CD8-positive, alpha-beta T cell (primary cell): ENCODE measurements at regions of chr7 and their contacts with region 1.

Region 1: GRCh38 chr7:100148559-100149350 is at the start of gene LAMTOR4:
- DNase-seq: peak; percentile 94 to 100 (median 97)
- ATAC-seq: peak; percentile 95
- H3K4me3 ChIP-seq: peak within 1 kb of the TSS; percentile 71 to 82
- H3K4me3 Mint-ChIP-seq: peak within 1 kb of the TSS; percentile 97
- H3K27ac ChIP-seq: peak within 1 kb of the TSS; percentile 73 to 95
- H3K27ac Mint-ChIP-seq: peak within 1 kb of the TSS; percentile 97
- H3K4me1 ChIP-seq: peaks cover 23% of the 10 kb centered on the region
- H3K4me1 Mint-ChIP-seq: peaks cover 38% of the 10 kb centered on the region
- H3K27me3 ChIP-seq: no peaks in the 10 kb centered on the region
- H3K27me3 Mint-ChIP-seq: no peaks in the 10 kb centered on the region
- CTCF ChIP-seq: no peak
- total RNA-seq, gene LAMTOR4: 68.4 to 83.1 TPM

Region 2: DNA sequence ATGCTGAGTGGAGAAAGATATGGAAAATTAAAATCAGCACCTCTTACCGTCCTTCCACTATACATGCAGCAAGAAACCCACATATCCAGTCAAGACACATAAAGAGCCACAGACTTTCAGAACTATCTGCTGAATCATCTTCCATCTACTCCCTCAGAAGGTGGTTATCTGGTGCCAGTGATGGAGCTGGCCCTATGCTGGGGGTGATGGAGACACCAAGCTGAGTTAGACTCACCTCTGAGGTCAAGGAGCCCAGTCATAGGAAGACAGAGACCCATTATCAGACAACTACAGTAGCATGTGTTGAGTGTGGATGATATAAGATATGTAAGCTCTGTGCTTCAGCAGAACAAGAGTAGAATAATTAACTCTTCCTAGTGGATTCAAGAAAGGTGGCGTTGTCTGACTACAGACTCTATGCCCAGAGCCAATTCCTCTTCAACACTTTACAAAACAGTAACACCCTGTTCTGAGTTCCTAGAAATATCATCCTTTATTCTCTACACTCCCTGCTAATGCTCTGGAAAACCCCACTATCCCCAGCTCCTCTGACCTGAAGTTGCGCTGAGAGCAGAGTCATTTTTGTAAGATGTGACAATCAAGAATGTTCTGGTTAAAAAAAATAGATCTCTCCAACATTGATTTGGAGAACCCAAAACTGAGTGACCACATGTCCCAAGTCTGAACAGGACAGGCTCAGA is 483.3 kb before region 1 on chr7:
- CTCF ChIA-PET with region 1: no interaction called
- POLR2A ChIA-PET with region 1: no interaction called
- intact Hi-C with region 1: no loop called
- DNase-seq: no peak
- ATAC-seq: no peak
- H3K4me3 ChIP-seq: no peak overlapping the region
- H3K4me3 Mint-ChIP-seq: no peak overlapping the region
- H3K27ac ChIP-seq: no peak overlapping the region
- H3K27ac Mint-ChIP-seq: peak overlapping the region; percentile 12
- H3K4me1 ChIP-seq: no peaks in the 10 kb centered on the region
- H3K4me1 Mint-ChIP-seq: no peaks in the 10 kb centered on the region
- H3K27me3 ChIP-seq: no peaks in the 10 kb centered on the region
- H3K27me3 Mint-ChIP-seq: no peaks in the 10 kb centered on the region
- CTCF ChIP-seq: no peak

Region 3: DNA sequence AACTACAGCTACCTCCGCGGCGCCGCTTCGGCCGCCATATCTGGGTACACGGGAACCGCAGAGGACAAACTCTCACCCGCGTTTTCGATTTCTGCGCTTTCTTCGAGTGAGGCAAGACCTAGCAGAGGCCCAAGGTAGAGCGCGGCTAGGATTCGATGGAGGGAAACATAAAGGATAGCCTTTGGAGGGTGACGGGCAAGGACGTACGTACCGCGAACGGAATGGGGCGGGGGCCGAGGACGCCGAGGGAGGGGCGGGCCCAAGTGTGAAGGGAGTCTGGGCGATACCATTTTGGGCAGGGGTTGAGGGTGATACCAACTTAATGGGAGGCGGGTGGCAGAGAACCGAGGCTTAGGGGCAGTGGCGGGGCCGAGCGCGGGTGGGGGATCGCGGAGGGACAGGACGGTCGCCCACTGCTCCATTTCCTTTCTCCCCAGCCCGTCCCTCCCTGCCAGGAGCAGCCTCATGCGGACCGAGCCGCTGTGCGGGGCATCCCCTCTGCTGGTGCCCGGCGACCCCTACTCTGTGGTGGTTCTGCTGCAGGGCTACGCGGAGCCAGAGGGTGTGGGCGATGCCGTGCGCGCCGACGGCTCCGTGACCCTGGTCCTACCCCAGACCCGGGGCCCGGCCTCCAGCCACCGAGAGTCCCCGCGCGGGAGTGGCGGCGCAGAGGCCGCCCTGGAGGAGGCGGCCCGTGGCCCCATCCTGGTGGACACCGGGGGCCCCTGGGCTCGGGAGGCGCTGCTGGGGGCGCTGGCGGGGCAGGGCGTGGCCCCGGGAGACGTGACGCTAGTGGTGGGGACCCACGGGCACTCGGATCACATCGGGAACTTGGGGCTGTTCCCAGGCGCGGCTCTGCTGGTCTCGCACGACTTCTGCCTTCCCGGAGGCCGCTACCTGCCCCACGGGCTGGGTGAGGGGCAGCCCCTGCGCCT is 21.6 kb before region 1 on chr7 and contains the start of gene MBLAC1:
- CTCF ChIA-PET with region 1: interaction called, 19 read pairs
- POLR2A ChIA-PET with region 1: interaction called, 8 read pairs
- intact Hi-C with region 1: loop called in 1 of 2 experiments (anchors 1 kb)
- DNase-seq: peak; percentile 83 to 97 (median 93)
- ATAC-seq: peak; percentile 83
- H3K4me3 ChIP-seq: peak within 1 kb of the TSS; percentile 81 to 99
- H3K4me3 Mint-ChIP-seq: peak within 1 kb of the TSS; percentile 100
- H3K27ac ChIP-seq: peak within 1 kb of the TSS; percentile 92 to 98
- H3K27ac Mint-ChIP-seq: peak within 1 kb of the TSS; percentile 100
- H3K4me1 ChIP-seq: peaks cover 24% of the 10 kb centered on the region
- H3K4me1 Mint-ChIP-seq: peaks cover 39% of the 10 kb centered on the region
- H3K27me3 ChIP-seq: no peaks in the 10 kb centered on the region
- H3K27me3 Mint-ChIP-seq: no peaks in the 10 kb centered on the region
- CTCF ChIP-seq: no peak
- total RNA-seq, gene MBLAC1: 4.2 to 4.6 TPM

Region 4: DNA sequence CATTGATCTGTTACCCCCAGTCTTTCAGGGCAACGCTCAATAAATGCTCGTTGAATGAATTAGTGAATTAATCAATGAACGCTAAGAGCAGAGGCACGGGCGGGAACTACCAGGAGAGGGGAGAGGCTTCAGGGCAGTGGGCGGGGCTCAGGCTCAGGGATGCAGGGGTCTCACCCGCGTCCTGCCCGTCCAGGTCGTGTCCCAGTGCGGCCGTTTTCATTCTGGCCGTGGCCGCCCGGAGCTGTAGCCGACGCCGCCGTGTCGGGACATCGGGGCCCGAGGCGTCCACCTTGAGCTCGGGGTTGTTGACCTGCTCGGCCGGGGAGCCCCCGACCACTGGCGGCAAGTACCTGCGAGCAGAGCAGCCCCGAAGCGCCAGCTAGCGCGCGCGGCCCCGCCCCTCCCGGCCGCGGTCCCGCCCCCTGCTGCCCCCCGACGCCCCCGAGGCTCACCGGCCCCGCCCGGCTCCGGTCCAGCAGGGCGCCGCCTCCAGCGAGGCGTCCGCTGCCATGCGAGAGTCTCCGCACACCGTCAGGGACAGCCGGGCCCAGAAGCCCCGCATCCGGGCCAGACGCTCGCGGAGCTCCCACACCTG is 22.4 kb after region 1 on chr7:
- CTCF ChIA-PET with region 1: interaction called, 3 read pairs
- POLR2A ChIA-PET with region 1: interaction called, 13 read pairs
- intact Hi-C with region 1: loop called (anchors 1 to 2 kb)
- DNase-seq: peak in 6 of 9 experiments; percentile 38 to 69 (median 59)
- ATAC-seq: peak; percentile 44
- H3K4me3 ChIP-seq: peak overlapping the region; percentile 42 to 54
- H3K4me3 Mint-ChIP-seq: peak overlapping the region; percentile 82
- H3K27ac ChIP-seq: no peak overlapping the region
- H3K27ac Mint-ChIP-seq: peak overlapping the region; percentile 88
- H3K4me1 ChIP-seq: peaks cover 56% of the 10 kb centered on the region
- H3K4me1 Mint-ChIP-seq: peaks cover 67% of the 10 kb centered on the region
- H3K27me3 ChIP-seq: peaks cover 0 to 23% of the 10 kb centered on the region in 2 experiments
- H3K27me3 Mint-ChIP-seq: peaks cover 3% of the 10 kb centered on the region
- CTCF ChIP-seq: no peak

Region 5: DNA sequence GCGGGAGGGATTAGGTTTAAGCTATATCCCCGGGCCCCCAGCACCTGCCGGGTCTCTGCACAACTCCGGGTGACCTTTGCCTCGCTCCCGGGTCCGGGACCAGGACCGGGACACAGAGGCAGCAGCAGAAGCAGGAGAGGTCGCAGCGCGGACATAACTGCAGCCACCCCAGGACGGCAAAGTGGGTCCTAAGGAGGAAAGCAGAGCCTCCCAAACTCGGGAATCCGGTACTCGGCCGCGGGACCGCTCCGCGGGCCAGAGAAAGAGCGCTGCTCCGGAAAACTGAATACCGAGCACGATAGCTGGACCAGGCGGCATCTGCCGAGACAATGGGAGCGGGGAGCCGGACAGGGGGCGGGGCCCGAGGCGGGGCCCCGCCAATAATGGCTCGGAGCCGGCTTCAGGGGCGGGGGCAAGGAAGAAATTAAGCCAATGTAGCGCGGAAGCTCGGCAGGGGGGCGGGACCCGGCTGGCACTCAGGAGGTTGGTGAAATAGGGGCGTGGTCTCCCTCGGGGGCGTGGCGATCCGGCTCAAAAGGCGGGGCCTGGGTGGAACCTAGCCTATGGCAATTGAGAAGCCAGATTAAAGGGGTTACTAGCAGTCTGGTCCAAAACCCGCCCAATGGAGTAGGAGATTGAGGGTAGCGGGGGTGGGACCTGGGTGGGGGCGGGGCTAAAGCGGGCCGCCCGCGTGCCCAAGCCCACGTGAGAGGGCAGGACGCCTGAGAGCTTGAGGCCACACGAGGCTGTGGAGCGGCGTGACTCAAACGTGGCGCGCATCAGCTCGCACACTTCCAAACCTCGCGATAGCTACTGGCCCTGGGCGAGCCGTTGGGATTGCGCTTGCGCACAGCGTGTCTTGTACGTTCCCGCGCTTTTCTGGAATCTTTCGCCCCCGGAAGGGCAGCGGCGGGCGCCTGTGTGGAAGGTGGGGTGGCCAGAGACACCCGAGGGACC is 28.6 kb after region 1 on chr7 and contains the starts of genes GPC2 and STAG3:
- CTCF ChIA-PET with region 1: interaction called, 7 read pairs
- POLR2A ChIA-PET with region 1: interaction called, 7 read pairs
- intact Hi-C with region 1: loop called (anchors 1 to 2 kb)
- DNase-seq: peak; percentile 89 to 98 (median 97)
- ATAC-seq: peak; percentile 92
- H3K4me3 ChIP-seq: peak within 1 kb of the TSS; percentile 52 to 61
- H3K4me3 Mint-ChIP-seq: peak within 1 kb of the TSS; percentile 74
- H3K27ac ChIP-seq: peak within 1 kb of the TSS in 1 of 2 experiments; percentile 6
- H3K27ac Mint-ChIP-seq: peak within 1 kb of the TSS; percentile 80
- H3K4me1 ChIP-seq: peaks cover 33% of the 10 kb centered on the region
- H3K4me1 Mint-ChIP-seq: peaks cover 43% of the 10 kb centered on the region
- H3K27me3 ChIP-seq: peaks cover 0 to under 1% of the 10 kb centered on the region in 2 experiments
- H3K27me3 Mint-ChIP-seq: no peaks in the 10 kb centered on the region
- CTCF ChIP-seq: no peak
- total RNA-seq, gene GPC2: 10.5 to 13.3 TPM
- total RNA-seq, gene STAG3: 6.3 to 6.6 TPM

Region 6: DNA sequence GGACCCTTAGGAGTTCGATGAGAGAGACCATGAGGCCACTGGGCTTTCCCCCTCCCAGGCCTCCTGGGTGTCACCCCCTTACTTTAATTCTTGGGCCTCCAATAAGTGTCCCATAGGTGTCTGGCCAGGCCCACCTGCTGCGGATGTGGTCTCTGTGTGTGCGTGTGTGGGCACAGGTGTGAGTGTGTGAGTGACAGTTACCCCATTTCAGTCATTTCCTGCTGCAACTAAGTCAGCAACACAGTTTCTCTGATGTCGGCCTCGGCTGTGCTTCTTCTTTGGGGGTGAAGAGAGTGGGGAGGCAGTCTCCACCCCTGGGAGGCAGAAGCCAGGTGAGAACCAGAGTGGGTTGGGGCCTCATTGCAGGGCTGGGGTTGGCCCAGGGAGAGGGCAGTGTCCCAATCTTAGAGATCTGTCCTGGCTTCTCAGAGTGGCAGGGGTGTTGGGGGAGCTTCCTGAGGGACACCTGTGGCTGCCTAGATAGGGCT is 72.5 kb after region 1 on chr7:
- CTCF ChIA-PET with region 1: interaction called, 6 read pairs
- POLR2A ChIA-PET with region 1: interaction called, 6 read pairs
- intact Hi-C with region 1: loop called (anchors 1 to 5 kb)
- DNase-seq: peak; percentile 75 to 95 (median 86)
- ATAC-seq: peak; percentile 67
- H3K4me3 ChIP-seq: peak overlapping the region; percentile 84 to 88
- H3K4me3 Mint-ChIP-seq: peak overlapping the region; percentile 94
- H3K27ac ChIP-seq: peak overlapping the region; percentile 93 to 98
- H3K27ac Mint-ChIP-seq: peak overlapping the region; percentile 99
- H3K4me1 ChIP-seq: peaks cover 52% of the 10 kb centered on the region
- H3K4me1 Mint-ChIP-seq: peaks cover 62% of the 10 kb centered on the region
- H3K27me3 ChIP-seq: no peaks in the 10 kb centered on the region
- H3K27me3 Mint-ChIP-seq: no peaks in the 10 kb centered on the region
- CTCF ChIP-seq: no peak

Region 7: DNA sequence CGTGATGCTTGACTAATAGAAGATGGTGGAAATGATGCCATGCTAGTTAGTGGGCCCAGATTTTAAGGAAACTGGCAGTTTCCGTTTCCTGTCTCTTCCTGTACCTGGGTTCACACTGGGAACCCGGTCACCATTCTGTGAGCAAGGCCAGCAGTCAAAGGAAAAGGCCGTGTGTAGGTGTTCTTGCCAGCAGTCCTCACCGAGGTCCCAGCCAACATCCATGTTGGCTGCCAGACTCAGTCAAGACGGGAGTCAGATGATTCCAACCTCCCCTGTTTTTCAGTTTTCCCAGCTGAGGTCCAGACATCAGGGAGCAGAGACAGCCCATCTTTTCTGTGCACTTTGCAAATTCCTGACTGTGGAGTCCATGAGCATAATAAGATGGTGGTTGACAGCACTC is 194.0 kb after region 1 on chr7:
- CTCF ChIA-PET with region 1: no interaction called
- POLR2A ChIA-PET with region 1: no interaction called
- intact Hi-C with region 1: loop called in 1 of 2 experiments (anchors 2 kb)
- DNase-seq: no peak
- ATAC-seq: no peak
- H3K4me3 ChIP-seq: no peak overlapping the region
- H3K4me3 Mint-ChIP-seq: no peak overlapping the region
- H3K27ac ChIP-seq: peak overlapping the region in 1 of 2 experiments; percentile 28
- H3K27ac Mint-ChIP-seq: peak overlapping the region; percentile 77
- H3K4me1 ChIP-seq: peaks cover 9% of the 10 kb centered on the region
- H3K4me1 Mint-ChIP-seq: peaks cover 23% of the 10 kb centered on the region
- H3K27me3 ChIP-seq: no peaks in the 10 kb centered on the region
- H3K27me3 Mint-ChIP-seq: no peaks in the 10 kb centered on the region
- CTCF ChIP-seq: no peak